ENCODE measurements at regions of chr2 and their contacts with region 1.

Region 1: DNA sequence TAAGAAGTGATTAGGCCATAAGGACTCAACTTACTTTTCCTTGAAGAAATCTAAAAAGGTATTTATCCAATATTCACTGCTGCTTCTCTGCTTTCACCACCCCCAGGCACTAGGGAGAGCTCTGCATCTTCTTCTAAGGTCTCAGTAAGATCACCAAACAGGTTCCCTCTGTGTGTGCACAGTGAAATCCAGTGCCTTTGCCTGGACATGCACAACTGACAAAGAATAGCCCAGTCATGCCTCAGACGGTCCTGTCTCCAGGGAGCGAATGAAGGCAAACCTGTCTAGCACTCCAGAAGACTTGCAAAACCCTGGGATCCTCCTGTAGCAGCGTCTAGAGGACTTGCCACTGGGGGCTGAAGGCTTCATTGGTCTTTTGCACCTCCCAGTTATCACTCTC is 344.5 kb upstream of the LRATD1 start:
- DNase-seq: no peak
- CTCF ChIP-seq: peak; percentile 36

Region 2: GRCh38 chr2:13821255-13821880 is 466.6 kb before region 1 on chr2:
- in situ Hi-C with region 1: no loop called
- DNase-seq: no peak
- CTCF ChIP-seq: no peak

Region 3: DNA sequence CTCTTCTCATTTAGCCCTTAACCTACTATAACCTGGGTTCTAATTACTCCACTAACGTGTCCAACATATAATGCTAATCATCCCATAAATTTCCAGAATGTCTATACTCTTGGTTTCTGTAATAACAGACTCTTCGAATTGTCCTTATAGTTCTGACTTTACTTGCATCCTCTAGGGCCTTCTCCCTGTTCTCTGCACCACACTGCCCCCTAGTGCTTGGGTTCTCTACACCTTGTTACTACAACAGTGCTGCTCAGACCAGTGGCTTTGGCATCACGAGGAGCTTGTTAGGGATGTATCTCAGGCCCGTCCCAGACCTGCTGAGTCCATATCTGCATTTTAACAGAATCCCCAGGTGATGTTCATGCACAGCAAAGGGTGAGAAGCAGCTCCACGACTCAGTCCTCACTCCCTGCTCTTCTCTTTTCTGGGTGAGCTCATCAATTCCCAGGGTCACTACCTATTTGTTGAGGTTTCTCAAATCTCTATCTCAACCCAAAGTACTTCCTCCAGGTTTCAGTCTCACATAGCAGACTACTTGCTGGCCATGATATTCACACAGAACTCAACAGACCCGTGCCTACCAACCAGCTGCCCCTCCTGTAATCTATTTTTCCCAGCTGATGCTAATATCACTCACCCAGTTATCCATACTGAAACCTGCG is 1289.2 kb after region 1 on chr2:
- in situ Hi-C with region 1: loop called (anchors 25 kb)
- DNase-seq: peak; percentile 55
- CTCF ChIP-seq: peak; percentile 87

Measured in GM13977 (cell line).